ENCODE measurements at regions of chr5 and their contacts with region 1.

Region 1: DNA sequence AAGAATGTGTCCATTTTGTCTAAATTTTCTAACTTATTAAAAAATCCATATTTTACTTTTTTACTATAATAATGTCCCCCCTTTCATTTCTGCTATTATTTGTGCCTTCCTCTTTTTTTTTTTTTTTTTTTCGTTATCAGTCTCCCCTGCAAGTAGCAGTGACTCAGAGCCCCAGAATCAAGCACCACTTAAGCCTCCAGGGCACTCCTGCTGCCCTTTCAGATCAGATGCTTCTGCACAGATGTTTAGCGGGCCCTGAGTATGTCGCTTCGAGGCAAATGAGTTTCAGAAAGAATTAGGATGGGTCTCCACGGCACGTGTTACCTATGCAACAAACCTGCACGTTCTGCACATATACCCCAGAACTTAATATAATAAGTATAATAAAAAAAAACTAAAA is 11.7 kb downstream of the MED7 start:
- DNase-seq: no peak
- H3K4me3 ChIP-seq: no peak overlapping the region
- H3K4me3 Mint-ChIP-seq: no peak overlapping the region
- H3K27ac ChIP-seq: no peak overlapping the region
- H3K27ac Mint-ChIP-seq: no peak overlapping the region
- H3K4me1 ChIP-seq: no peaks in the 10 kb centered on the region
- H3K4me1 Mint-ChIP-seq: peaks cover 6 to 21% (median 9%) of the 10 kb centered on the region in 4 donors
- H3K27me3 ChIP-seq: no peaks in the 10 kb centered on the region
- H3K27me3 Mint-ChIP-seq: no peaks in the 10 kb centered on the region

Region 2: DNA sequence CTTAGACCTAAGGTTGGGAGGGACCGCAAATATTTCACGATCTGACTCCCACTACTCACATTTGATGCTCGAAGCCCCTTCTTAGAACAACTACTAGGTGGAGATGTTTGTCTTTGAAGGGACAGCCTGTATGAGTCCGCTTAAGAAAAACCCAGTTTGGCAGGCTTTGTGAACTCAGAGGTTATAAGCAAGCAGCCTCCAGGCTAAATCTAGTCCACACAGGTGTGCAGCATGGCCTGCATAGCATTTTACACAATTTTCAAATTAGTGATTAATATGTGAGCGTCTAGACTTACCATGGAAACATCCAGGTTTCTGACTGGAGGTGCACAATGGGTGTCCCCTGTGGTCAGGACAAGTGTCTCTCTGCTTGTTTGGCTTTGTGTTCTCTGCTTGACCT is 1990.3 kb before region 1 on chr5:
- CTCF ChIA-PET with region 1: interaction called, 11 read pairs
- POLR2A ChIA-PET with region 1: no interaction called
- intact Hi-C with region 1: no loop called
- DNase-seq: no peak
- H3K4me3 ChIP-seq: no peak overlapping the region
- H3K4me3 Mint-ChIP-seq: no peak overlapping the region
- H3K27ac ChIP-seq: no peak overlapping the region
- H3K27ac Mint-ChIP-seq: no peak overlapping the region
- H3K4me1 ChIP-seq: no peaks in the 10 kb centered on the region
- H3K4me1 Mint-ChIP-seq: peaks cover 0 to 2% (median under 1%) of the 10 kb centered on the region in 4 donors
- H3K27me3 ChIP-seq: no peaks in the 10 kb centered on the region
- H3K27me3 Mint-ChIP-seq: peaks cover 13% of the 10 kb centered on the region in 2 donors

Region 3: GRCh38 chr5:155700333-155700732 is 1430.6 kb before region 1 on chr5:
- CTCF ChIA-PET with region 1: interaction called, 5 read pairs
- POLR2A ChIA-PET with region 1: no interaction called
- intact Hi-C with region 1: loop called (anchors 5 kb)
- DNase-seq: peak in 1 of 5 donors; percentile 5
- H3K4me3 ChIP-seq: no peak overlapping the region
- H3K4me3 Mint-ChIP-seq: no peak overlapping the region
- H3K27ac ChIP-seq: no peak overlapping the region
- H3K27ac Mint-ChIP-seq: no peak overlapping the region
- H3K4me1 ChIP-seq: no peaks in the 10 kb centered on the region
- H3K4me1 Mint-ChIP-seq: no peaks in the 10 kb centered on the region
- H3K27me3 ChIP-seq: no peaks in the 10 kb centered on the region
- H3K27me3 Mint-ChIP-seq: no peaks in the 10 kb centered on the region

Region 4: DNA sequence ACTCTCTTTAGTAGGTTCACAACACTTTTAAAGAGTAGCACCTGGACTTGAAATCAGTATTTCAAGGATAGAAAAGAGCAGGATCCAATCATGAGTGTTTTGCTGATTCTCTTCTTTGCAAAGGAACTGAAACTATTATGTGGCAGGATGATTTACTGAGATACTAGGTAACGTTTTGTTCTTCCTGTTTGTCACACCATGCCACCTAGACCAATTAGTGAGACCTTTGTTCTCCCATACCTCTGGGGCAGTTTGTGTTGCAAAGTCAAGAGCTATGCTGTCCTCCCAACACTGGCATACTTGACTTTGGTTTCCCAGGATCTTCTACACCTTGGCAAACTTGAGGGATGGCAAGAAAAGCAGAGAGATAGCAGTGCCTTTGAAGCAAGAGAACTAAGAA is 237.4 kb before region 1 on chr5:
- CTCF ChIA-PET with region 1: interaction called, 7 read pairs
- POLR2A ChIA-PET with region 1: no interaction called
- intact Hi-C with region 1: loop called (anchors 1 kb)
- DNase-seq: no peak
- H3K4me3 ChIP-seq: no peak overlapping the region
- H3K4me3 Mint-ChIP-seq: no peak overlapping the region
- H3K27ac ChIP-seq: no peak overlapping the region
- H3K27ac Mint-ChIP-seq: peak overlapping the region in 1 of 7 donors; percentile 11
- H3K4me1 ChIP-seq: peaks cover 8% of the 10 kb centered on the region
- H3K4me1 Mint-ChIP-seq: peaks cover 9 to 27% (median 19%) of the 10 kb centered on the region in 4 donors
- H3K27me3 ChIP-seq: no peaks in the 10 kb centered on the region
- H3K27me3 Mint-ChIP-seq: peaks cover 0 to 1% of the 10 kb centered on the region in 2 donors